ENCODE measurements at regions of chr17 and their contacts with region 1.

Region 1: DNA sequence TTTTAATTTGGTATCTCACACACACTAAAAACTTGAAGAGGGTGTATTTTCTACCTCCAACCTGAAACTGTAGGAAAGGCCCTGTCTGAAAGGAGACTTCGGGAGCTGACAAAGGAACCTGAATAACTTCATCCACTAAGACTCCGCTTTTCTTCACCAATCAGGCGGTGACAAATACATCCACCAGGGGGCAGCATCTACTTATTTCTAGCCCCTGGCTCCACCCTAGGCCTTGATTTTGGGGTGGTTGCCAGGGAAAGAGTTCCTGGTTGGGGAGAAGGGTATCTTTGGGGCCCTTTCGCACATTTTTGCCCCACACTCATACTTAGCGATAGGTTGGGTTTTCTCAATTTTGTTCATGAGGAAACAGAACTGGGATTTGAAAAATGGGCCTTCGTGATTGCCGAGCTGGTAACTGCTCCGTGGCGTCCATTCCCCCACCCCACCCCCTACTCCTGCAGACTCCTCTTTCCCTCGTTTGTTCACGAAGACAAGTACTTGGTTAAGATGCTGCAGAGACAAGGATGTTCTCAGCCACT is 4.8 kb upstream of the ARL4D start:
- DNase-seq: peak; percentile 87 to 91
- H3K4me3 ChIP-seq: no peak overlapping the region
- H3K4me3 Mint-ChIP-seq: no peak overlapping the region
- H3K27ac Mint-ChIP-seq: peak overlapping the region; percentile 53
- H3K4me1 ChIP-seq: peaks cover 5% of the 10 kb centered on the region; the same call in 1 of the 2 replicates
- H3K4me1 Mint-ChIP-seq: peaks cover 5% of the 10 kb centered on the region
- H3K27me3 ChIP-seq: no peaks in the 10 kb centered on the region
- H3K27me3 Mint-ChIP-seq: no peaks in the 10 kb centered on the region
- CTCF ChIP-seq: peak; percentile 89 to 96

Region 2: DNA sequence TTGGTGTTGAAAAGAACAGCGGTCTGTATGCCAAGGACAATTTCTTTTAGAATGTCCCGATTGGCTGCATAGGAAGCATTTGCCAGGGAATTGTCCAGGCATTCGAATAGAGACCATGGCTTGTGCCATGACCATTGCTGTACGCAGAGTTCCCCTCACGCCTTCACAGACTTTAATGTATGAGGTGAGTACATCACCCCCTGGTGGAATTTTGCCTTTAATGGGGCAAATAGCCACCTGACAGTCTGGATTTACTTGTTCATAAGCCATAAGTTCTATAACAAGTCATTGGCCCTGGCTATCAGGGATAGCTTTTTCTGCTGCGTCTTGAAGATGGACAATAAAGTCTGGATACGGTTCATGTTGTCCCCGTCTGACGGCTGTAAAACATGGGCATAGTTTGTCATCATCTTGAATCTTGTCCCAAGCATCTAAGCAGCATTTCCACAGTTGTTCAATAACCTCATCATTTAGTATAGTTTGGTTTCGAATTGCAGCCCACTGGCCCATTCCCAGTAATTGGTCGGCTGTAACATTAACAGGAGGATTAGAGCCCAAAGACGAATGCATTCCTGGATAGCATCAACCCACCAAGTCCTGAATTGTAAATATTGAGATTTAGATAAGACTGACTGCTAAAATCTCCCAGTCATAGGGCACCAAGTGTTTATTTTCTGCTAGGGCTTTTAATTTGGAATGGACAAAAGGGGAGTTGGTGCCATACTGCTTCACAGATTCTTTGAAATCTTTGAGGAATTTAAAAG is 63.0 kb before region 1 on chr17:
- CTCF ChIA-PET with region 1: no interaction called
- POLR2A ChIA-PET with region 1: no interaction called
- intact Hi-C with region 1: no loop called
- DNase-seq: peak in 1 of 2 experiments; percentile 62
- H3K4me3 ChIP-seq: no peak overlapping the region
- H3K4me3 Mint-ChIP-seq: no peak overlapping the region
- H3K27ac Mint-ChIP-seq: peak overlapping the region; percentile 66
- H3K4me1 ChIP-seq: peaks cover 70% of the 10 kb centered on the region
- H3K4me1 Mint-ChIP-seq: peaks cover 72% of the 10 kb centered on the region
- H3K27me3 ChIP-seq: no peaks in the 10 kb centered on the region
- H3K27me3 Mint-ChIP-seq: no peaks in the 10 kb centered on the region
- CTCF ChIP-seq: peak; percentile 43 to 48

Region 3: DNA sequence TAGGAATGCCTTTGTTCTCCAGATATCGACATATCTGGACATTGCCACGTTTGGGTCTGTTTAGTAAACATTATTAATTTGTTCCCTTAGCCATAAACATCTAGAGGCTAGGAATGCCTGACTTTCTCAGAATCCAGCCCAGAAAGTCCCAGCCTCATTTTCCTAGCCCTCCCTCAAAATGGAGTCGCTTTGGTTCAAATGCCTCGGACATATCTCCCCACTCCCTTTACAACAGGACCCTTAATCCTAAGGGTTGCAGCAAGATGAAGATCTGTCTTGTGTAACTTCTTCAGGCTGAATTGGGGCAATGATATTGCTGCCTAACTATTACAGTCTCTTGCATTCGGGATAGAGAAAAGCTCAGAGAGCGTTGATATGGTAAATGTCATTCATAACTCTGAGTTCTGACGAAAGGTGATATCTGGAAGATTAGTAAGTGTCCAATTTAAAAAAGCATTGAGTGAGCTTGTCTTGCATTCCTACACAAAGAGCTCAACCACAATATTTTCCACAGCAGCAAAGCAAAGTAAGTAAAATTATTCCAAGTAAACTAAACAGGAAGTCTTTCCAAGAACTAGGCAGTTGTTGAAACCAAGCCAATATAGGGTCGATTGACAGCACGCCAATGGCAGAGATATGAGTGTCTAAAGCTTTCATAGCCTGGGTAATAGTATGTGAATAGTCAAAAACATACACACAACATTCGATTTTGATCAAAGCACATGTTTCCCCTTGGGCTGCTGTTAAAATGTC is 41.3 kb before region 1 on chr17:
- CTCF ChIA-PET with region 1: no interaction called
- POLR2A ChIA-PET with region 1: no interaction called
- intact Hi-C with region 1: no loop called
- DNase-seq: no peak
- H3K4me3 ChIP-seq: no peak overlapping the region
- H3K4me3 Mint-ChIP-seq: no peak overlapping the region
- H3K27ac Mint-ChIP-seq: no peak overlapping the region
- H3K4me1 ChIP-seq: peaks cover 36% of the 10 kb centered on the region
- H3K4me1 Mint-ChIP-seq: peaks cover 8% of the 10 kb centered on the region
- H3K27me3 ChIP-seq: no peaks in the 10 kb centered on the region
- H3K27me3 Mint-ChIP-seq: no peaks in the 10 kb centered on the region
- CTCF ChIP-seq: no peak

Region 4: DNA sequence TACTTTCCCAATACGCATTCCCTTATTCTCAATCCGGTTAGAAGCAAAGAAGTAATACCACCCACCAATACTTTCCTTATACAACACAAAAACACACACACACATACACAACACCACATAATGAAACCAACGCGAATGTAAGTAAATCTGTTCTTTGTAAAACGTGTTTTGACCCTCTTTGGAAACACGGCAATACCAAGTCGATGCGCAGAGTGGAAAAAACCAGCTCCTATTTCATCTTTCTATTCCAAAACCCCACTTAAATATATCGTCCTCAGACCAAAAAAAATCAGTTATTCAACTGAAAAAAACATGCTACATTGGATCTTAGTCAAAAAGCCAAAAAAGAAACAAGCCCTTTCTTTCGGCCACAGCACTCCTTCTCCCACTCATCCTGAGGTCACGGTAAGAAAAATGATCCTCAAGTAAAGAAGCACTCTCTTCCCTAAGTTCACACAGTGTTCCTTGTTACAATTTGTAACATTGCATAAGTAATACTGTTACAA is 26.2 kb before region 1 on chr17:
- CTCF ChIA-PET with region 1: interaction called, 13 read pairs
- POLR2A ChIA-PET with region 1: interaction called, 224 read pairs
- intact Hi-C with region 1: loop called (anchors 2 kb)
- DNase-seq: peak; percentile 79 to 80
- H3K4me3 ChIP-seq: peak overlapping the region; percentile 15; the same call in 1 of the 2 replicates
- H3K4me3 Mint-ChIP-seq: peak overlapping the region; percentile 90
- H3K27ac Mint-ChIP-seq: peak overlapping the region; percentile 100
- H3K4me1 ChIP-seq: peaks cover 31% of the 10 kb centered on the region
- H3K4me1 Mint-ChIP-seq: peaks cover 43% of the 10 kb centered on the region
- H3K27me3 ChIP-seq: no peaks in the 10 kb centered on the region
- H3K27me3 Mint-ChIP-seq: peaks cover 4% of the 10 kb centered on the region
- CTCF ChIP-seq: no peak

Region 5: DNA sequence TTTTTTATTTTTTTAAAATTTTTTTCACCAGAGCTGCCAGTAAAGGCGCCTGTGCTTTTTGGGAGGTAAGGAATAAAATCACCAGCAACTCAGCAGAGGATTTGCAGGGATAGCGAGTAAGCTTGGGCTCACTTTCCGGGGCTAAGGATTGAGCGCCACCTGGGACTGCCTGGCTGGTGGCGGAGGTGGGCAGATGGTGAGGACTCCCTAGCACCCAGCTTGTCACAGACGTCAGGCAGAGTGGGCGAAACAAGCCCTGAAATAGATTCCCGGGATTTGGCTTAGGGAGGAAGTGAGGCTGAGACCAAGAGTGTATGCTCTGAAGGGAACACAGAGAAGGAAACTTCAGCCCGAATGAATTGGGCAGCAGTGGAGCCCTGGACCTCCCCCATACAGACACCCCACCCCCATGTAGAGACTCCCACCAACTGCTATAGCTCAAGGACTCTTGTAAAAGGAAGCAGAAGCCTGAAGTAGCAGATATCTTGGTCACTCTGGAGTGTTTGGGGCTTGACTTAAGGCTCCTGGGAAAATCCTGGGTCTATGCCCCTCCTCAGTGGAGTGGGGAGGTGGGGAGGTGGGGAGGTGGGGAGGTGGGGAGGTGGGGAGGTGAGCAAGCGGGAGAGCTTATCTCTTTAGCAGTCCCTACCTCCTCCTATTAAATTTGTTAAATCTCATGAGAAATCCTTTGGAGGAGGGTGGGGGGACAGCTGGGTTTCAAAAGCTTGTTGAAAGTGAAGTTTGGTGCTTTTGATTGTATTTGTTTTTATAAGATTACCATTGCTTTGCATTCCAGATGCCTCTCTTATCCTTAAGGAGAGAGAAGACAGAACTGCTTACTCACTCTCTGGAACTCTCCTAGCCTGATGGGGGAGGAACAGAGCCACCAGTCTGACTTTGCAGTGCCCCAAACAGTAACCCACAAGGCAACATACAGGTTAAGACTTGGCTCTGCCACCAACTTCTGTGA is 12.9 kb after region 1 on chr17:
- CTCF ChIA-PET with region 1: interaction called, 6 read pairs
- POLR2A ChIA-PET with region 1: interaction called, 11 read pairs
- intact Hi-C with region 1: no loop called
- DNase-seq: no peak
- H3K4me3 ChIP-seq: no peak overlapping the region
- H3K4me3 Mint-ChIP-seq: no peak overlapping the region
- H3K27ac Mint-ChIP-seq: peak overlapping the region; percentile 95
- H3K4me1 ChIP-seq: peaks cover 24% of the 10 kb centered on the region
- H3K4me1 Mint-ChIP-seq: peaks cover 39% of the 10 kb centered on the region
- H3K27me3 ChIP-seq: no peaks in the 10 kb centered on the region
- H3K27me3 Mint-ChIP-seq: no peaks in the 10 kb centered on the region
- CTCF ChIP-seq: no peak

Region 6: GRCh38 chr17:43431714-43432523 is 37.9 kb after region 1 on chr17:
- CTCF ChIA-PET with region 1: no interaction called
- POLR2A ChIA-PET with region 1: interaction called, 3 read pairs
- intact Hi-C with region 1: loop called (anchors 2 kb)
- DNase-seq: no peak
- H3K4me3 ChIP-seq: no peak overlapping the region
- H3K4me3 Mint-ChIP-seq: no peak overlapping the region
- H3K27ac Mint-ChIP-seq: peak overlapping the region; percentile 16
- H3K4me1 ChIP-seq: peaks cover 42% of the 10 kb centered on the region
- H3K4me1 Mint-ChIP-seq: peaks cover 45% of the 10 kb centered on the region
- H3K27me3 ChIP-seq: no peaks in the 10 kb centered on the region
- H3K27me3 Mint-ChIP-seq: no peaks in the 10 kb centered on the region
- CTCF ChIP-seq: no peak

Region 7: GRCh38 chr17:43467981-43468581 is 74.1 kb after region 1 on chr17:
- CTCF ChIA-PET with region 1: interaction called, 3 read pairs
- POLR2A ChIA-PET with region 1: interaction called, 11 read pairs
- intact Hi-C with region 1: no loop called
- DNase-seq: no peak
- H3K4me3 ChIP-seq: no peak overlapping the region
- H3K4me3 Mint-ChIP-seq: no peak overlapping the region
- H3K27ac Mint-ChIP-seq: peak overlapping the region; percentile 39
- H3K4me1 ChIP-seq: peaks cover 27% of the 10 kb centered on the region
- H3K4me1 Mint-ChIP-seq: peaks cover 20% of the 10 kb centered on the region
- H3K27me3 ChIP-seq: no peaks in the 10 kb centered on the region
- H3K27me3 Mint-ChIP-seq: no peaks in the 10 kb centered on the region
- CTCF ChIP-seq: no peak

Region 8: DNA sequence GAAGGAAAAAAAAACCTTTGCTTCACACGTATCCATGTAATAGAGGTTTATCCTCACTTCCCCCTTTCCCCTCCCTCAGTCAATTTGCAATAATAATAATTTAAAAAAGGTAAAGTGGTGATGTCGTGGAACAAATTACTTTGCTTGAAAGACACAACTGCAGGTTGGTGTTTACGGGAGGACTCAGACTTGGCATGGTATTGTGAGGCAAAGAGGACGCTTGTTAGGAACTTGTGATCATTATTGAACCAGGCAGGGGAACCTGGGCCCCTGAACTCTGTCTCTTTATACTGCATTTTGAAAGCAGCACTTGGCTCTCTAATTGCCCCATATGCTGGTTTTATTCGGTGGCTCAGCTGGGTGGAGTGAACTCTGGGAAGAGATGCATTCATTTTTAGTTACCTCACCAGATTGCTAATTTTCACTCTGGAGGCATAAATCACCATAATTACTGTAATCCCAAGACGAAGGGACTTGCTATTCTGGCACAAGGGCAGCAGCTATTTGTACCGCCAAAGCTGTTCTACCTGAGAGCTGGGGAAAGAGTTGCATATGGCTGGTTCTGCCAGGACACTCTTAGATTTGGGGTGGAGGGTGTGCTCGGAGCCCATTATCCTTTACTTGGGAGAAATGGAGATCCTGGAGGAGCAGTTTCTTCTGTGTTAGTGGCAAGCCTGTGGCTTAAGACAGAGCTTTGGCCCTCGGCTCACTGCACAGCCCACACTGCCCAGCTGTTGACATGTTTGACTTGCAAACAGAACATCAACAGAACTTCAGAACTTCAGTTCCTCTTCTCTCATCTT is 84.0 kb after region 1 on chr17:
- CTCF ChIA-PET with region 1: interaction called, 211 read pairs
- POLR2A ChIA-PET with region 1: interaction called, 34 read pairs
- intact Hi-C with region 1: loop called (anchors 1 kb)
- DNase-seq: no peak
- H3K4me3 ChIP-seq: no peak overlapping the region
- H3K4me3 Mint-ChIP-seq: no peak overlapping the region
- H3K27ac Mint-ChIP-seq: no peak overlapping the region
- H3K4me1 ChIP-seq: peaks cover 12% of the 10 kb centered on the region
- H3K4me1 Mint-ChIP-seq: peaks cover 6% of the 10 kb centered on the region
- H3K27me3 ChIP-seq: no peaks in the 10 kb centered on the region
- H3K27me3 Mint-ChIP-seq: no peaks in the 10 kb centered on the region
- CTCF ChIP-seq: no peak